ENCODE measurements at regions of chr18 and their contacts with region 1.

Region 1: DNA sequence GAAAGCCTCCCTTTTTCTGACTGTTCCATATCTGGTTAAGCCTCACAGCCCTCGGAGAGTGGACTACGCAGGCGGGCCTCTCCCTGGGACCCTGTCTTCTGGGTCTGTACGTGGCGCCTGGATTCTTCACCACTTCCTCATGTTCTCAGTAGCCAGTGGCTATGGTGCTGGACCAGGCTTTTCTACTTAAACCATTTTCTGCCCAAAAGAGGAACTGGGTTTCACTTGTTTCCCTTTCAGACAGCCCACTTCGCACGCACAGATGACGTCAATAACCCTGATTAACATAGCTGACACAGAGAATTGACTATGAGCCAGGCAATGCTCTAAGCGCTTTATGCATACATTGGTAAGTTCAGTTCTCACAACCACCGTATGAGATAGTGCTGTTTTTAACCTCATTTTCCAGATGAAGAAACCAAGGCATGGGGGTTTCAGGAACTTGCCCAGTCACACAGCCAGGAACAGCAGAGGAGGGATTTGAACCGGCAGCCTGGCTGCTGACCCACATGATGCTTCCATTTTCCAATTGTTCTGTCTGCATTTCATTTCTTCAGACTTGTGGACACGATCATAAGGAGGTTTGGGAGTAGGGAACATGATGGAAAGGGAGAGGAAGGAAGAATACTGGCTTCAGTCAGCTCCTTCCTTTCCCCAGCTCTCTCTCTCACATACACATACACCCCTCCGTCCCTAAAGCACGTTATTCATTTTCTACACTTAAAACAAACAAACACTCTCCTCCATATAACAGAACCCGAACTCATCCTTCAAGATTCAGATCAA is 41.7 kb downstream of the MYOM1 start:
- DNase-seq: peak; percentile 66
- ATAC-seq: peak; percentile 86
- H3K4me3 Mint-ChIP-seq: peak overlapping the region; percentile 76
- H3K27ac Mint-ChIP-seq: peak overlapping the region; percentile 99
- H3K4me1 Mint-ChIP-seq: peaks cover 32% of the 10 kb centered on the region
- H3K27me3 Mint-ChIP-seq: no peaks in the 10 kb centered on the region
- CTCF ChIP-seq: no peak

Region 2: DNA sequence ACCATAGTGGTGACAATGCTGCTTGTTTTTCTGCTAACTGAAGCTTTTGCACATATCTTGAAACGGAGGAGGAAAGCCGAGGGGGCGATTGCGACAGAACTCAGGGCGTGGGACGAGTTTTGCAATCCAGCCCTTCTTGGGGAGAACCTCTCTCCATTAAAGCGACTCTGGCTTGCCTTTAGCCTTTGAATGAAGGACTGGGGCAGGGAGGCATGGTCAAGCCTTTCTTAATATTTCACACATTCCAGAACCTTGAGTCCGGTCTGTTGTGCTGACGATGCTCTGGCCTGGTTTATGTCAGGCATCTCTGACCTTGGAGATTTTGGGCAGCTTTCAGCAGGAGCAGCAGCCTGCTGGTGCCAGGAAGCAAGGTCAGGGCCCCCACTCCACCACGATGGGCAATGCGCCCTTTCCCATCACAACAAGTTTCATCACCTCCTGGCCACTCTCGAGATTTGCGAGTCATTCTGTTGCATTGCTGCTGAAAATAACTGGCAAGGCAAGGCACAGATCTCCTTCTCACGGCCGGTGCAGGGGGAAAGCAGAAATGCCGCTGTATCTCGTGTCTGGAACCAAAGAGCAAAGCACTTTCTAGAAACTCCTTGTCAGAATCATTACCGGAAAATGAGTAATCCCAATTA is 320.5 kb before region 1 on chr18:
- CTCF ChIA-PET with region 1: no interaction called
- POLR2A ChIA-PET with region 1: no interaction called
- intact Hi-C with region 1: no loop called
- DNase-seq: no peak
- ATAC-seq: no peak
- H3K4me3 Mint-ChIP-seq: no peak overlapping the region
- H3K27ac Mint-ChIP-seq: no peak overlapping the region
- H3K4me1 Mint-ChIP-seq: no peaks in the 10 kb centered on the region
- H3K27me3 Mint-ChIP-seq: peaks cover 2% of the 10 kb centered on the region
- CTCF ChIP-seq: no peak

Region 3: DNA sequence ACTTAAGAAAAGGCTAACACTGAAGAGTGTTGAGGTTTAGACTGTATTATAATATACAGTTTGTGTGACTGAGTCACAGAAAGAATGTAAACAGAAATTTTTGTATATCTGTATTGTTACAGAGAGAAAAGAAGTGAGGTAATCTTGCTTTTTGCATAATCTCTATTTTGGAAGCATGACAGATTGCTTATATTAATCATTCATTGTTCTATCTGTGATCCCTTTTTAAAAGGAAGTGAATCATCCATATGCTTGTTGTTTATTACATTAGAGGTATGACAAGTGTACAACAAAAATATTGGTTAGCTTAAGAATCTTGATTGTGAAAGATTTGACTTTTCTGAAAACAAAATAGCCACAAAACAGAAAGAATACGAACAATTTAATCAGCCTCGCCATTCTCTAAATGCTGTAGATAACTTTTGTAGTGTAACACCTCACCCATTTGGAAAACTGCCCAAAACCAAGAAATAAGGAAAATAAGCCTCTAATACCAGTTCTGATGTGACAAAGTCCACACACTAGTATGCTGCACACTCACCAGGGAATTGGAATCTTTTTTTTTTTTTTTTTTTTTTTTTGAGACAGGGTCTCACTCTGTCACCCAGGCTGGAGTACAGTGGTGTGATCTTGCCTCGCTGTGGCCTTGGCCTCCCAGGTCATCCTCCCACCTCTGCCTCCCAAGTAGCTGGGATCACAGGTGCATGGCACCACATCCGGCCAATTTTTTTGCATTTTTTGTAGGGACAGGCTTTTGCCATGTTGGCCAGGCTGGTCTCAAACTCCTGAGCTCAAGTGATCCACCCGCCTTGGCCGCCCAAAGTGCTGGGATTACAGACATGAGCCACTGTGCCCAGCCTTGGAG is 73.7 kb before region 1 on chr18:
- CTCF ChIA-PET with region 1: no interaction called
- POLR2A ChIA-PET with region 1: no interaction called
- intact Hi-C with region 1: no loop called
- DNase-seq: no peak
- ATAC-seq: no peak
- H3K4me3 Mint-ChIP-seq: no peak overlapping the region
- H3K27ac Mint-ChIP-seq: no peak overlapping the region
- H3K4me1 Mint-ChIP-seq: no peaks in the 10 kb centered on the region
- H3K27me3 Mint-ChIP-seq: no peaks in the 10 kb centered on the region
- CTCF ChIP-seq: no peak

Region 4: DNA sequence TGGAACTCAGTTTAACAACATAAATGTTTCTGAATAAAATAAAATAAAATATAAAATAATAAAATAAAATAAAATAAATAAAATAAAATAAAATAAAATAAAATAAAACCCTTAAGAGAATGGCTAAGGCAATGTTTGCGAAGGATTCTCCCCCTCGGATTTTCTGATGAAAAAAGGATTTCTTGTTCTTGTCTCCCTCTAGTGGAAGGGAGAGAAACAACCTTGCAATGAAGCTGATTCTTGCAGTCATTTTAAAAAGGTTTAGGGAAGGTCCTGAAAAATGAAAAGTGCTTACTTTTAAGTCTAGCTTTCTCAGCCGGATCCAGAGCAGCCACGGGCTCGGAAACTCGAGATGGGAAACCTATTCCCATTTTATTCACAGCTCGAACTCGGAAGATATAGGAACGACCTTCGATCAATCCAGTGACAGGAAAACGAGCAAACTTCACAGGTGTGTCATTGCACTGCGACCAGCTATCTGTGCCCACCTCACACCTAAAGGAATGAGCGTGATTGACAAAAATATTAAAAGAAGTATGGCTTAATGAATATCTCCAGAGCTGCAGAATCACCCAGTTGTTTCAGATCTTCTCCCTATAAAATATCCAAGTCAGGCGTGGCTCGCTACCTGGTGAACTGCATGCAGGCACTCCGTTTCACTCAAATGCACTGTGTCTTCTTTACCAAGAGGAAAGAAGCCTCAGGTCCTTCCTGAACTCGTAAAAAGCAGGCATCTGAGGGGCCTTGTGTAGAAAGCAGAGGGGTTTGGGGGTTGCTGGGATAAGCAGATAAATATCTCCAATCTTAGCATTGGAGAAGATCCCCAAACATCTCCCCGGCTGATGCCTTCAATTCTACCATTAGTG is 26.5 kb before region 1 on chr18:
- CTCF ChIA-PET with region 1: interaction called, 17 read pairs
- POLR2A ChIA-PET with region 1: interaction called, 8 read pairs
- intact Hi-C with region 1: loop called (anchors 1 kb)
- DNase-seq: no peak
- ATAC-seq: no peak
- H3K4me3 Mint-ChIP-seq: no peak overlapping the region
- H3K27ac Mint-ChIP-seq: peak overlapping the region; percentile 36
- H3K4me1 Mint-ChIP-seq: peaks cover 2% of the 10 kb centered on the region
- H3K27me3 Mint-ChIP-seq: no peaks in the 10 kb centered on the region
- CTCF ChIP-seq: peak; percentile 99

Region 5: DNA sequence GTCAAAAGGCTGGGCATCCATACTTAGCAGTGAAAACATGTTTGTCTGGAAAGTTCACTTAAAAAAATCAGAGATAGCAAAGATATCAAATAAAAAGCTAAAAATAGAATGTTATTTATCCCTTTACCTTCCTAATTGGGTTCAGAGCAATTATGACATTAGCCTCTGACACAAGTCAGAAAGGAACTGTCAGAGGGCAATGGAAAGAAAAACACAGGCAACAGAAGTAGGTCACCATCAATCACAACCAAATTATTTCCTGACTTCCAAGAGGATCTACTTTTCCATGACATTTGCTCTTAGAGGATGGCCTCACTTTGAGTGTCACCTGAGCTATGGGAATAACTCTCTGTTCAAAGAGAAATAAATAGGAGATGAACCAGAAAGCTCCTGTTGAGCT is 14.2 kb after region 1 on chr18:
- CTCF ChIA-PET with region 1: no interaction called
- POLR2A ChIA-PET with region 1: interaction called, 9 read pairs
- intact Hi-C with region 1: loop called (anchors 2 kb)
- DNase-seq: no peak
- ATAC-seq: no peak
- H3K4me3 Mint-ChIP-seq: no peak overlapping the region
- H3K27ac Mint-ChIP-seq: no peak overlapping the region
- H3K4me1 Mint-ChIP-seq: peaks cover 4% of the 10 kb centered on the region
- H3K27me3 Mint-ChIP-seq: no peaks in the 10 kb centered on the region
- CTCF ChIP-seq: no peak

Region 6: DNA sequence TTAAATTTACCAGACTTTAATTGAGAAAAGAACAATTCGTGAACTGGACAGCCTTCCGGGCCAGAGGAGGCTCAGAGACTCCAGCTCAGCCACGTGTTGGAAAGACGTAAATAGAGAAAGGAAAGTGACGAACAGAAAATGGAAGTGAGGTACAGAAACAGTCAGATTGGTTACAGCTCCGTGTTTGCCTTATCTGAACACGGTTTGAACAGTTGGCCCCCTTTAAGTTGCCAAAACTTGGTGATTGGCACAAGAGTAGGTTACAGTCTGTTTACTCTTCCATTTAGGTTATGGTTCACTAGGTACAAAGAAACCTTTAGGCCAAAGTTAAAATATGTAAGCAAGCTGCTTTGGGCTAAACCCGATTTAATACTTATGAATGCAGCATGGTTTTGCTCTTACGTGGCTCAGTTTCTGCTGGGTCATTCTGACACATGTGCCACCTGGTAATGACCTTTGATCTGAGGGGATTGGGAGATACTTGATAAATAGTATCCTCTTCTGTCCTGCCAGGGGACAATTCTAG is 206.6 kb after region 1 on chr18:
- CTCF ChIA-PET with region 1: no interaction called
- POLR2A ChIA-PET with region 1: no interaction called
- intact Hi-C with region 1: no loop called
- DNase-seq: no peak
- ATAC-seq: peak; percentile 65
- H3K4me3 Mint-ChIP-seq: peak overlapping the region; percentile 61
- H3K27ac Mint-ChIP-seq: peak overlapping the region; percentile 93
- H3K4me1 Mint-ChIP-seq: peaks cover 24% of the 10 kb centered on the region
- H3K27me3 Mint-ChIP-seq: no peaks in the 10 kb centered on the region
- CTCF ChIP-seq: no peak